Activated CD8-positive, alpha-beta memory T cell treated with anti-CD3 and anti-CD28 coated beads, Interleukin-2, amount 10 ng/mL, durations not matched to agents 7 days and 5 days (primary cell): ENCODE measurements at regions of chr3 and their contacts with region 1.

Region 1: DNA sequence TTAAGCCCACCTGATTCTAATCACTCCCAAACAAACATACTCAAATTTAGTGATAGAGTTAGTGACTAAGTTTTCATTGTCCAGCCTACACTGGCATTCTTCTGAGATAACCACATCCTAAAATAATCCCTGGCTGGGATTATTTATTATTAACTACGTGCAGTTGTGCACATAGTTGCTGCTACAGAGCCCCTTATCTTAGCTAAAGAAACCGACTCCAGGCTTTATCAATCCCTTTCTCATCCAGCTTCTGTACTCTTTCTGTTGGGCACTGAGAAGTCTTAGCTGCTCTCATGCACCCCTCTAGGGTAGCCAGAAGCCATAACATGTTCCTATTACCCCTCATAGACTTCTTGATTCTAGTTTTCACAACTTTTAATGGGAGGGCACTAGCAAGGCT is 208.7 kb downstream of the MBNL1 start:
- DNase-seq: no peak
- ATAC-seq: no peak
- H3K4me3 Mint-ChIP-seq: no peak overlapping the region
- H3K27ac Mint-ChIP-seq: no peak overlapping the region
- H3K4me1 Mint-ChIP-seq: peaks cover under 1% of the 10 kb centered on the region
- H3K27me3 Mint-ChIP-seq: peaks cover 22% of the 10 kb centered on the region

Region 2: DNA sequence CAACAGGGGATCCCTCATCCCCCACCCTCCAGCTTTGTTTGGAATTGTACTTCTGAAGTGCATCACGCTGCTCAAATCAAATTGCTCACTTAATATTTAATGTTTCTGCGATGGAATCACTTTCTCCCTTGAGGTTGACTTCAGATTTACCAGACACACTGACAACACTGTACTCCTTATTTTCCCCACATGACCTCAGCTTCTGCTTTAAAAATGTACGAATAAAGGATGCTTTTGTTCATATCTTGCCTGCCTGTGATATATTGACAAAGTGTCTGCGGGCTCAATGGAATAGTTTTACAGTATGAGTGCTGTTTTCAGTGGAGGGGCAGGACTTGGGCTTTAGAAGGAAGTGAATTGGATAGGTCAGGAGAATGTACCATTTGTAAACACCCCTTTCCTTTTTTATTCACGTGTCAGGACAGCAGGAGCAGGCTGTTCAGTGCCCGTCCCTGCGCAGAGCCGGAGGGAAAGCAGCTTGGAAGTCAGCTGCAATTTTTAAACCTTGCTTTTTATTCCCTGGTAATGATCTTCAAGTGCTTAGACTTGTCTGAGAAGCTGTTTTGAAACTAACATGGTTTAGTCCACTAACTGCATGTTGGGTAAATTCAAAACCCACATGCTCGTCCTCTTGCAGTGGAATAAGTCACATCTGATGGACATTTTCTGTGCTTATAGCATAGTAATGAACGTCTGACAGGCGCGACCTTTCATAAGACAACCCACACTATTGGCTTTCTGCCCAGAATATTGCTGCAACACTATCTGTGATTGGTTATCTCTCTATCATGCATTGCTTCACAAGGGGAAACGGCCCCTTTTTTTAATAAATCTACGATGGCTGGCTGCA is 178.8 kb before region 1 on chr3:
- CTCF ChIA-PET with region 1: no interaction called
- DNase-seq: peak; percentile 65
- ATAC-seq: peak; percentile 66
- H3K4me3 Mint-ChIP-seq: peak overlapping the region; percentile 67
- H3K27ac Mint-ChIP-seq: peak overlapping the region; percentile 82
- H3K4me1 Mint-ChIP-seq: peaks cover 70% of the 10 kb centered on the region
- H3K27me3 Mint-ChIP-seq: no peaks in the 10 kb centered on the region

Region 3: GRCh38 chr3:152466784-152467183 is 10.6 kb before region 1 on chr3:
- CTCF ChIA-PET with region 1: interaction called, 12 read pairs
- DNase-seq: no peak
- ATAC-seq: peak; percentile 66
- H3K4me3 Mint-ChIP-seq: no peak overlapping the region
- H3K27ac Mint-ChIP-seq: no peak overlapping the region
- H3K4me1 Mint-ChIP-seq: peaks cover 5% of the 10 kb centered on the region
- H3K27me3 Mint-ChIP-seq: no peaks in the 10 kb centered on the region

Region 4: DNA sequence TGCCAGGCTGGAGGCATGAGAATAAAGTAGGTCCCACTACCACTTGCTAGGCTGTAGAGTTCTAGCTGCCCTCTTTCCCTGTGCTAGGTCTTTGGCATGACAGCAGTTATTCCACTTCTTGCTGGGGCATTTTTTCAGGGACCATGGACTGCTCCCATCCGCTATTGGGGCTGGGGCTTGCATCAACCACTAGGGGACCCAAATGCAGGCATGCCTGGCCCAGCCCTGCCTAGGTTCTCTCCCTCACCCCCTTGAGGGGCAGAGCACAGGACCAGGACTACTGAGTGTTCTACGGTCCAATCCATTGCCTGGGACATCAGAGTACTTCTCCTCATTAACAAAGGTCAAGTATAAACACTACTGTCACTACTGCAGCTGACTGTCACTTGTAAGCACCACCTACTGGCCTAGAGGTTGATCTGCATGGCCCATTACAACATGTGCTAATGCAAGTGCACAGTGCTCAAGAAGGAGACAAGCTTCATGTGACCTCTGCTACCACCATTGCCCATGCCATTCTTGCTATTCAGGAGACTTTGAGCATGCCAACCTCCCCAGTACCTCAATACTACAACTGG is 61.9 kb after region 1 on chr3:
- CTCF ChIA-PET with region 1: no interaction called
- DNase-seq: no peak
- ATAC-seq: no peak
- H3K4me3 Mint-ChIP-seq: no peak overlapping the region
- H3K27ac Mint-ChIP-seq: no peak overlapping the region
- H3K4me1 Mint-ChIP-seq: peaks cover 2% of the 10 kb centered on the region
- H3K27me3 Mint-ChIP-seq: peaks cover 32% of the 10 kb centered on the region